ENCODE measurements at regions of chr16 and their contacts with region 1.

Region 1: DNA sequence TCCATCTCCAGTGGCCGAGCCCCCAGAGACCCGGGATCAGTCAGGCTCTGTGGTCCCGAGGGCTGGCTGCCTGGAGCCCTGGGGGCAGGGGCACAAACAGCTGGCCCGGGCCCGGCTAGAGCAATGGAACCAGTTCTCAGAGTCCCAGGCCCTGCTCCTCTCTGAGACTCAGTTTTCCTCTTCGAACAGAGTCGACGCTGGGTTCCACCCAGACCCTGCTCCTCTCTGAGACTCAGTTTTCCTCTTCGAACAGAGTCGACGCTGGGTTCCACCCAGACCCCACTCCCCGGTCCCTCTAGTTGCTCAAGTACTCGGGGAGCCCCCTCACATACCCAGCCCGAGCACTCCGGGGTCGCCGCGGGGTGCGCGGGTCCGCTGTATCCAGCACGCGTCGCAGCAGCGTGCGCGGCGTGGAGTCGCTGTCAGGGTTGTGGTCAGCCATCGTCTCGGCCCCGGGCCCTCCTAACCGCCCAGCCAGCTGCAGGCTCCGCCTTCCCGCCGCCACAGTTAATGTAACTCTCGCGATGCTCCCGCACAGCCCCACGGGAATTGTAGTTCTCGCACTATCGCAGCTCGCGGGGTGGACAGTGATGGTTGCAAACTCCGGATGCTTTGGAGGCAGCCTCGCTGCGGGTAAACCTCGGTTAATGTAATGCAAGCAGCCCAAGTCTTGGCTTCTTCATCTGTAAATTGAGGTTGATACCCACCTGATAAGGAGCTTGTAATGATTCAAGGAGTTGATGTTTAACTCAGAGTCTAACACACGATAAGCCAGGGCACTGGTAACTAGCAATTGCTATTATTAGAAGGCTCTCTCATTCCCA is 8.5 kb upstream of the THAP11 start:
- DNase-seq: peak; percentile 94 to 98 (median 97)
- ATAC-seq: peak; percentile 98
- H3K4me3 ChIP-seq: peak overlapping the region; percentile 92
- H3K27ac ChIP-seq: peak overlapping the region; percentile 69
- H3K4me1 ChIP-seq: peaks cover 3% of the 10 kb centered on the region
- H3K27me3 ChIP-seq: no peaks in the 10 kb centered on the region

Region 2: GRCh38 chr16:67917852-67918236 is 84.2 kb after region 1 on chr16:
- intact Hi-C with region 1: loop called in 1 of 4 experiments (anchors 5 kb)
- DNase-seq: no peak
- ATAC-seq: peak; percentile 32 to 76
- H3K4me3 ChIP-seq: no peak overlapping the region
- H3K27ac ChIP-seq: peak overlapping the region; percentile 89
- H3K4me1 ChIP-seq: peaks cover 9% of the 10 kb centered on the region
- H3K27me3 ChIP-seq: no peaks in the 10 kb centered on the region

Region 3: GRCh38 chr16:67928561-67929364 is 95.1 kb after region 1 on chr16:
- intact Hi-C with region 1: loop called in 1 of 4 experiments (anchors 5 kb)
- DNase-seq: peak; percentile 69 to 88 (median 88)
- ATAC-seq: peak; percentile 59 to 62
- H3K4me3 ChIP-seq: no peak overlapping the region
- H3K27ac ChIP-seq: no peak overlapping the region
- H3K4me1 ChIP-seq: peaks cover 3% of the 10 kb centered on the region
- H3K27me3 ChIP-seq: no peaks in the 10 kb centered on the region